Mammary epithelial cell (primary cell): ENCODE measurements at regions of chr16 and their contacts with region 1.

Region 1: DNA sequence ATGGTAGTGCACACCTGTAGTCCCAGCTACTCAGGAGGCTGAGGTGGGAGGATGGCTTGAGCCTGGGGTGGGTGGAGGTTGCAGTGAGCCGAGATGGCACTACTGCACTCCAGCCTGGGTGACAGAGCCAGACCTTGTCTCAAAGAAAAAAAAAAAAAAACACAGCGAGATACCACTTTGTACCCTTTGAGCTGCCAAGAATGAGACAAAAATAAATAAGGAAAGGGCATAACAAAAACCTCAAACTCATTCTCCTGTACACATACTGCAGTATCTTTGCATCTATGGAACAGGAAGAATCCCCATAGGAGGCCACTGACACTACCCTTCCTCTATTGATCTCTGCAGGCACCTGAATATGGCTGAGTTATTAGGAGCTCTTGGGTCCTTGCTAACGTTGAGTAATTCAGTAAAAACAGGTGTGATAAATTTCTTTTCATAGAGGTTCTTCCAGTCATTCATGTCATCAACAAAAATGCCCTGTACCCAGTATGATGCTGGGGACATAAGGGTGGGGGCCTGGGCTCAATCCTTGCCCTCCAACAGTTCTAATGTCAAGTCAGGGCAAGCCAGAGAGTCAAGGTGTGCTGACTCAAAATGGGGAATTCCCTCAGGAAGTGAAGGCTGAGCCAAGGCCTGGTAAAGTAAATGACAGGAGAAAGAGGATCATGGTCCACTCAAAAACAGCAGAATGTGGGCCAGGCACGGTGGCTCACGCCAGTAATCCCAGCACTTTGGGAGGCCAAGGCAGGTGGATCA is 26.9 kb downstream of the RANBP10 start:
- DNase-seq: peak; percentile 81
- H3K4me3 ChIP-seq: no peak overlapping the region
- H3K27ac ChIP-seq: no peak overlapping the region
- H3K4me1 ChIP-seq: peaks cover 24% of the 10 kb centered on the region
- H3K27me3 ChIP-seq: no peaks in the 10 kb centered on the region
- CTCF ChIP-seq: no peak

Region 2: DNA sequence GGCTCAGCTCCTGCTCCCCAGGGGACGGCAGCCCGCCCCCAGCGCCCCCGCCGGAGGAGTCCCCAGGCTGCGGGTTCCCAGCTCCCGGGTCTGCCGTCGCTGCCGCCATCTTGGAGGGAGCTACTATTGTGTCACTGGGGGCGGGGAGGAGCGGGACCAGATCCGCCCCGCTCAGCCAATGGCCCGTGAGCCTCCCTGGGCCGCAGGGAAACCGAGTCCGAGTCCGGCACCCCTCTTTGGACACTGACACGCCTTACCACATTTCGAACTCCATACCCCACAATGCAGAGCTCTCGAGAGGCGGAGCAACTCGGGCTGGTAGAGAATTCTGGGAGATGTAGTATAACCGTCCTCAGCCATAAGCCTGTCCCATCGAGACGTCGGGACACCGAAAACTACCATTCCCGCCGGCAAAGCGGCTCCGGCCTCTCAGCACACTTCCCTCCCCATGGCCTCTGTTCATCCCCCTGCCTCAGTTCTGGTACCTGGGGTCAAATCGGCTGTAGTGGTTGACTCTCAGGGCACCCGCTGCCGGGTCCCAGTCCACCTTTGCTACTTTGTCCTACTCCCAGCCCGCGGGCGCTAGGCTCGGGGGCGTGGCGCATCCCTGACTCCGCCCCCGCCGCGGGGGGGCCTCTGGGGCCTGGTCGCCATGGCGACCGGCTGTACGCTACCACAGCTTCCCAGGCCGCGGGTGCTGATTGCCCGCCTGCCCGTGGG is 27.2 kb after region 1 on chr16 and contains the starts of genes RANBP10 and TSNAXIP1:
- CTCF ChIA-PET with region 1: interaction called, 3 read pairs
- dilution Hi-C with region 1: no loop called
- in situ Hi-C with region 1: no loop called
- intact Hi-C with region 1: loop called (anchors 1 kb)
- DNase-seq: peak; percentile 99
- H3K4me3 ChIP-seq: peak within 1 kb of the TSS; percentile 80 to 93 (median 86)
- H3K27ac ChIP-seq: peak within 1 kb of the TSS; percentile 78
- H3K4me1 ChIP-seq: peaks cover 15% of the 10 kb centered on the region
- H3K27me3 ChIP-seq: no peaks in the 10 kb centered on the region
- CTCF ChIP-seq: no peak
- total RNA-seq, gene RANBP10: 5.5 to 15.3 TPM
- total RNA-seq, gene TSNAXIP1: 0.33 to 0.99 TPM